CD8-positive, alpha-beta memory T cell (primary cell): ENCODE measurements at regions of chr5 and their contacts with region 1.

Region 1: GRCh38 chr5:157552650-157553049 is 22.9 kb downstream of the ADAM19 start:
- DNase-seq: no peak
- H3K4me3 ChIP-seq: no peak overlapping the region
- H3K4me3 Mint-ChIP-seq: peak overlapping the region in 2 of 7 donors; percentile 26 to 66
- H3K27ac ChIP-seq: no peak overlapping the region
- H3K27ac Mint-ChIP-seq: peak overlapping the region in 2 of 8 donors; percentile 32 to 84
- H3K4me1 ChIP-seq: peaks cover 19% of the 10 kb centered on the region
- H3K4me1 Mint-ChIP-seq: peaks cover 59 to 85% (median 77%) of the 10 kb centered on the region in 3 donors
- H3K27me3 ChIP-seq: no peaks in the 10 kb centered on the region
- H3K27me3 Mint-ChIP-seq: no peaks in the 10 kb centered on the region

Region 2: DNA sequence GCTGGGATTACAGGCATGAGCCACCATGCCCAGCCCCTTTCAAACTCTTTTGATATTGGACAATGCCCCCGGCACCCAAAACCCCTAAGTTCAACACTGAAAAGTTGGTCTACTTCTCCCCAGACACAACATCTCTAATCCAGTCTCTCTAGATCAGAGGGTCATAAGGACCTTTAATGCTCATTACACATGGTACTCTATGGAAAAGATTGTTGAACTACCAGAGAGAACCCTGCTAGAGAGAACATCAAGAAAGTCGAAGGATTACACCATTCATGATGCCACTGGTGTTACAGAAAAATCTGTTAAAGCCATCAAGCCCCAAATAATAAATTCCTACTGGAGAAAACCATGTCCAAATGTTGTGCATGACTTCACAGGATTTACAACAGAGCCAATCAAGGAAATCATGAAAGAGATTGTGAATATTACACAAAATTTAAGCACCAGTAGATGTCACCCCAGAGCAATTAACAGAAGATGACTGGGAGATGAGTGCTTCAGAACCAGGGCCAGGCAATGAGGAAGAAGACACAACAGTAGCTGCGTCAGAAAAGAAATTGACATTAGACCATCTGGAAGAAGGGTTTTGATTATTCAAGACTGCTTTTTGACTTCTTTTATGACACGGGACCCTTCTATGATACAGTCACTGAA is 121.0 kb before region 1 on chr5:
- CTCF ChIA-PET with region 1: no interaction called
- POLR2A ChIA-PET with region 1: no interaction called
- DNase-seq: peak in 3 of 5 donors; percentile 5 to 37 (median 21)
- H3K4me3 ChIP-seq: no peak overlapping the region
- H3K4me3 Mint-ChIP-seq: no peak overlapping the region
- H3K27ac ChIP-seq: no peak overlapping the region
- H3K27ac Mint-ChIP-seq: peak overlapping the region in 2 of 8 donors; percentile 15 to 47
- H3K4me1 ChIP-seq: no peaks in the 10 kb centered on the region
- H3K4me1 Mint-ChIP-seq: peaks cover 5 to 8% (median 7%) of the 10 kb centered on the region in 3 donors
- H3K27me3 ChIP-seq: no peaks in the 10 kb centered on the region
- H3K27me3 Mint-ChIP-seq: peaks cover 5 to 6% of the 10 kb centered on the region in 2 donors

Region 3: GRCh38 chr5:157502143-157502647 is 50.5 kb before region 1 on chr5:
- CTCF ChIA-PET with region 1: no interaction called
- POLR2A ChIA-PET with region 1: no interaction called
- DNase-seq: no peak
- H3K4me3 ChIP-seq: no peak overlapping the region
- H3K4me3 Mint-ChIP-seq: no peak overlapping the region
- H3K27ac ChIP-seq: no peak overlapping the region
- H3K27ac Mint-ChIP-seq: peak overlapping the region in 3 of 8 donors; percentile 21 to 55 (median 35)
- H3K4me1 ChIP-seq: no peaks in the 10 kb centered on the region
- H3K4me1 Mint-ChIP-seq: peaks cover 11 to 25% (median 19%) of the 10 kb centered on the region in 3 donors
- H3K27me3 ChIP-seq: no peaks in the 10 kb centered on the region
- H3K27me3 Mint-ChIP-seq: no peaks in the 10 kb centered on the region

Region 4: GRCh38 chr5:157540707-157541446 is 11.8 kb before region 1 on chr5:
- CTCF ChIA-PET with region 1: interaction called, 5 read pairs
- POLR2A ChIA-PET with region 1: interaction called, 12 read pairs
- DNase-seq: peak in 2 of 5 donors; percentile 9 to 36
- H3K4me3 ChIP-seq: peak overlapping the region; percentile 42
- H3K4me3 Mint-ChIP-seq: peak overlapping the region; percentile 29 to 86 (median 78)
- H3K27ac ChIP-seq: peak overlapping the region; percentile 62
- H3K27ac Mint-ChIP-seq: peak overlapping the region; percentile 84 to 97 (median 92)
- H3K4me1 ChIP-seq: peaks cover 68% of the 10 kb centered on the region
- H3K4me1 Mint-ChIP-seq: peaks cover 67 to 81% (median 79%) of the 10 kb centered on the region in 3 donors
- H3K27me3 ChIP-seq: no peaks in the 10 kb centered on the region
- H3K27me3 Mint-ChIP-seq: no peaks in the 10 kb centered on the region